A549 (cell line): ENCODE measurements at regions of chr20 and their contacts with region 1.

Region 1: DNA sequence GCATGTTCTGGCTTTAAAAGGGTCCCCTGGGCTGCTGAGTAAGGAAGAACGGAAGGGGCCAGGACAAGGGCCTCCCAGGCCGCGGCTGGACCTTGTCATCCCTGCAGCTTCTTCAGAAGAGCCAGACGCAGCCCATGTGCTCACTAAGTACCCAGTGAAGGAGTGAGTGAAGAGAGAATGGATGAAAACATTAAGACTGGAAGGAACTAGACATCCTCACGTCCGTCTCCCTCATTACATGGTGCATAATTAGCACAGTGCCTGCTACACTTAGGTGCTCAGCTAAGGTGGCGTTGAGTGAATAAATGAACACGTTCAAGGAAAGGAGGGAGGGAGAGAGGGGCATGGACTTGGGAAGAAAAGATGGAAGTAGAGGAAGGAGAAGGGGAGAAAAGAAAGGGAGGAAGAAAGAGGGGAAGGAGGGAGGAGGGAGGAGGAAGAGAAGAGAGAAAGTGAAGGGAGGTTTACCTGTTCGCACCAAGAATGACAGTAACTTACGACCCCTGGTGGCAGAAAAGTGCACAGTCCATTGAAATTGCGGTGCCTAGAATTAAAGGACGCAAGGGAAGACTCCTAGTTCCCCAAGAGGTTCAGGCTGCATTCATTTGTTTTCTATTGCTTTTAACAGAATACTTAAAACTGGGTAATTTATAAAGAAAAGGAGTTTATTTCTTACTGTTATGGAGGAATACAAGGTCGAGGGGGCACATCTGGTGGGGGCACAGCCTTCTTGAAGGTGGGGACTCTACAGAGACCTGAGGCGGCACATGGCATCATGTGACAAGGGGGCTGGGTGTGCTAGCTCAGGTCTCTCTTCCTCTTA is 8.0 kb downstream of the TP53RK start:
- DNase-seq: peak; percentile 57 to 58
- ATAC-seq: peak; percentile 73 to 85; a peak in 5 of 6 replicates
- H3K4me3 ChIP-seq: no peak overlapping the region
- H3K27ac ChIP-seq: no peak overlapping the region
- H3K4me1 ChIP-seq: no peaks in the 10 kb centered on the region
- CTCF ChIP-seq: peak; percentile 78
- EP300 ChIP-seq: no peak
- POLR2A ChIP-seq: no peak
- RAD21 ChIP-seq: peak; percentile 61 to 73

Region 2: GRCh38 chr20:46520976-46521579 is 160.2 kb before region 1 on chr20:
- CTCF ChIA-PET with region 1: interaction called, 113 read pairs
- POLR2A ChIA-PET with region 1: no interaction called
- DNase-seq: peak; percentile 33 to 67
- ATAC-seq: peak; percentile 71 to 81
- H3K4me3 ChIP-seq: no peak overlapping the region
- H3K27ac ChIP-seq: no peak overlapping the region
- H3K4me1 ChIP-seq: no peaks in the 10 kb centered on the region
- CTCF ChIP-seq: peak; percentile 52
- EP300 ChIP-seq: no peak
- POLR2A ChIP-seq: no peak
- RAD21 ChIP-seq: peak; percentile 68 to 78

Region 3: GRCh38 chr20:46545077-46545826 is 136.0 kb before region 1 on chr20:
- CTCF ChIA-PET with region 1: interaction called, 12 read pairs
- POLR2A ChIA-PET with region 1: no interaction called
- DNase-seq: no peak
- ATAC-seq: no peak
- H3K4me3 ChIP-seq: no peak overlapping the region
- H3K27ac ChIP-seq: no peak overlapping the region
- H3K4me1 ChIP-seq: no peaks in the 10 kb centered on the region
- CTCF ChIP-seq: no peak
- EP300 ChIP-seq: no peak
- POLR2A ChIP-seq: no peak
- RAD21 ChIP-seq: no peak

Region 4: DNA sequence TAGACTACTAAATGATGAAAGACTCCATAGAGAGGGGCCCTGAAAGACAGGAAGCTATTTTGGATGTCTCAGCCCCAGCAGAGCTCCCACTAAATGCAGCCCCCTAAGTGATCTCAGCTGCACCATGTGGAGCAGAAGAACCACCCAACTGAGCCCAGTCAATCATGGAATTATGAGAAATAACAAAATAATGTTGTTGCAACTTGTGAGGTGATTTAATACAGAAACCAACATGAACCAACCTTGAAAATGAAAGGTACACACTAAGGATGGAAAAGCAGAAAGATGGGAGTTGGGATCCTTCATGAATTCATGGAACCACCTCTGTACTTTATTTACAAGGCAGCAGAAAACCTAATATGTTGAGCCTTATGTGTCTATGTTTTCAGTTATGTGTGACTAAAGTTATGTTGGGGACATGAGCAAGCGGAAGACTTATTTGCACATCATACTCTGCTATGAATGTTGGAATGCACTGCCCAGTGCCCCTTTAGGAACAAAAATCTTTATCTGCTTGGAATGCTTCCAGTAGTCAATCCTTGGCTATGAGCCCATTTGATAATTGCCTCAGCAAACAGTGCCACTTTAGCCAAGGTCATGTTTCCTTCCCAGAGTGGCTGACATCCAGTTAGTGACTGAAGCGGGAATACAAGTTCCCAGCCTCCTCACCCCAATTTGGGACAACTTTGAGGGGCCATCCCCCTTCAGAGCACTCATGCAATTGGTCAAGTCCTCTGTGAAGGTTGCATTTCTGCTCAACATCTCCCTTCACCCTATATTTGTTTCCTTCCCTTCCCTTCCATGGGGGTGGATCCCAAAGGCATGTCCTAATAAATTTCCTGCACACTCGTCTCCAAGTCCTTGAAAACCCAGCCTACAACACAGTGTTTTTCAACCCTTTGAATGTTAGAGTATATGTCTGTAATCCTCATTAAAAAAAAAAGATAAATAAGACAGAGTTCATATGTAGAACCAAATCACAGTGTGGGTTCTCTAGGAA is 10.4 kb before region 1 on chr20:
- CTCF ChIA-PET with region 1: interaction called, 22 read pairs
- POLR2A ChIA-PET with region 1: no interaction called
- DNase-seq: no peak
- ATAC-seq: no peak
- H3K4me3 ChIP-seq: no peak overlapping the region
- H3K27ac ChIP-seq: no peak overlapping the region
- H3K4me1 ChIP-seq: no peaks in the 10 kb centered on the region
- CTCF ChIP-seq: no peak
- EP300 ChIP-seq: no peak
- POLR2A ChIP-seq: no peak
- RAD21 ChIP-seq: no peak

Region 5: GRCh38 chr20:46811224-46812084 is 130.2 kb after region 1 on chr20:
- CTCF ChIA-PET with region 1: no interaction called
- POLR2A ChIA-PET with region 1: no interaction called
- DNase-seq: no peak
- ATAC-seq: no peak
- H3K4me3 ChIP-seq: no peak overlapping the region
- H3K27ac ChIP-seq: peak overlapping the region in 1 of 2 experiments; percentile 36; a peak in 2 of 6 replicates
- H3K4me1 ChIP-seq: peaks cover 38% of the 10 kb centered on the region
- CTCF ChIP-seq: no peak
- EP300 ChIP-seq: no peak
- POLR2A ChIP-seq: no peak
- RAD21 ChIP-seq: no peak